ENCODE measurements at regions of chr2 and their contacts with region 1.

Region 1: DNA sequence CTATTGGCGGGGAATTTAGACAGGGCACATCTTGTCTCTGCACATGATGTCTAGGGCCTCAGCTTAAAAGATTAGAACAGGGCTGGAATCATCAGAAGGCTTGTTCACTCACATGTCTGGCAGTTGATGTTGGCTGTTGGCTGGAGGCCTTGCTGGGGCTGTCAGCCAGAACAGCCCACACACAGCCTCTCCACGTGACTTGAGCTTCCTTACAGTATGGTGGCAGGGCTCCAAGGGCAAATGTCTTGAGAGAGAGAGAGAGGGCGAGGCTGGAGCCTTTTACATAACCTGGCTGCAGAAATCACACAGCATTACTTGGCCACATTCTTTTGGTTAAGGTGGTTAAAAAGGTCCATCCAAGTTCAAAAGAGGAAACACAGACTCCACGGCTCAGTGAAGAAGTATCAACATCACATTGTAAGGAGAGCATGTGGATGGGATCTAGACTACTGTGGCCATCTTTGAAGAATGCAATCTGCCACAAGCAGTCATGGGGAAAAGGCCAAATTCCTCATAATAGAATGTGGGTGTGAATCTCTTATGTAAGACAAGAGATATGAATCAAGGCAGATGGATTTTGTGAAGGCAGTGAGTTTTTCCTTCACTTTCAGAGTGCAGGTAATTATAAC is 30.4 kb downstream of the SRSF7 start:
- DNase-seq: peak in 1 of 2 experiments; percentile 30
- H3K4me3 ChIP-seq: no peak overlapping the region
- H3K4me3 Mint-ChIP-seq: no peak overlapping the region
- H3K27ac Mint-ChIP-seq: peak overlapping the region; percentile 8
- H3K4me1 ChIP-seq: peaks cover 4% of the 10 kb centered on the region; the same call in 1 of the 2 replicates
- H3K4me1 Mint-ChIP-seq: peaks cover 13% of the 10 kb centered on the region
- H3K27me3 ChIP-seq: no peaks in the 10 kb centered on the region
- H3K27me3 Mint-ChIP-seq: no peaks in the 10 kb centered on the region
- CTCF ChIP-seq: no peak

Region 2: GRCh38 chr2:38581193-38582147 is 139.3 kb before region 1 on chr2:
- CTCF ChIA-PET with region 1: interaction called, 15 read pairs
- POLR2A ChIA-PET with region 1: no interaction called
- intact Hi-C with region 1: no loop called
- DNase-seq: peak in 1 of 2 experiments; percentile 69
- H3K4me3 ChIP-seq: no peak overlapping the region
- H3K4me3 Mint-ChIP-seq: no peak overlapping the region
- H3K27ac Mint-ChIP-seq: no peak overlapping the region
- H3K4me1 ChIP-seq: peaks cover 4% of the 10 kb centered on the region; the same call in 1 of the 2 replicates
- H3K4me1 Mint-ChIP-seq: peaks cover 9% of the 10 kb centered on the region
- H3K27me3 ChIP-seq: no peaks in the 10 kb centered on the region
- H3K27me3 Mint-ChIP-seq: no peaks in the 10 kb centered on the region
- CTCF ChIP-seq: peak; percentile 50 to 82

Region 3: GRCh38 chr2:38626326-38627035 is 94.2 kb before region 1 on chr2:
- CTCF ChIA-PET with region 1: no interaction called
- POLR2A ChIA-PET with region 1: no interaction called
- intact Hi-C with region 1: no loop called
- DNase-seq: no peak
- H3K4me3 ChIP-seq: no peak overlapping the region
- H3K4me3 Mint-ChIP-seq: no peak overlapping the region
- H3K27ac Mint-ChIP-seq: no peak overlapping the region
- H3K4me1 ChIP-seq: peaks cover 30% of the 10 kb centered on the region; the same call in 1 of the 2 replicates
- H3K4me1 Mint-ChIP-seq: peaks cover 20% of the 10 kb centered on the region
- H3K27me3 ChIP-seq: no peaks in the 10 kb centered on the region
- H3K27me3 Mint-ChIP-seq: no peaks in the 10 kb centered on the region
- CTCF ChIP-seq: no peak

Region 4: DNA sequence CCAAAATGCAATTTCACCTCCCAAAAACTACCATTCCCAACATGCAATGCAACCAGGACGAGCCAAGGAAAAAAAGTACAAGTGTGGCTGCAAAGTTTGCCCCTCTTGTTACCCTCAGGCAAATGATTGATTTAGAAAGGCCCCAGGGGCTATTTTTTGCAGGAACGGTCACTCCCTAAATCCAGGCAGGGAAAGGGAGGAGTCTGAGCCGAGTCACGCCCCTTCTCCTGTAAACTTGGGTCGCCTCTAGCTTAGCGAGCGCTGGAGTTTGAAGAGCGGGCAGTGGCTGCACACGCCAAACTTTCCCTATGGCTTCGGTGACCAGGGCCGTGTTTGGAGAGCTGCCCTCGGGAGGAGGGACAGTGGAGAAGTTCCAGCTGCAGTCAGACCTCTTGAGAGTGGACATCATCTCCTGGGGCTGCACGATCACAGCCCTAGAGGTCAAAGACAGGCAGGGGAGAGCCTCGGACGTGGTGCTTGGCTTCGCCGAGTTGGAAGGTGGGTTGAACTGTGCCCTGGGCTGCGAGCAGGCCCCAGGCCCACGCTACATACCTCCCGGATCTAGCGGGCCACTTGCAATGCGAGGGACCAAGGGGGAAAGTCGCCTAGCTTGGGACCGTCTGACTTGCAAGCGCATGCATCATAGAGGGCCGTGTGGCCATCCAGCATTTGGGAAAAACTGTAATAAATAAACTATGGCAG is 54.7 kb before region 1 on chr2 and contains the start of gene GALM:
- CTCF ChIA-PET with region 1: no interaction called
- POLR2A ChIA-PET with region 1: no interaction called
- intact Hi-C with region 1: loop called (anchors 5 kb)
- DNase-seq: peak; percentile 95
- H3K4me3 ChIP-seq: peak within 1 kb of the TSS; percentile 67
- H3K4me3 Mint-ChIP-seq: peak within 1 kb of the TSS; percentile 95
- H3K27ac Mint-ChIP-seq: peak within 1 kb of the TSS; percentile 71
- H3K4me1 ChIP-seq: peaks cover 20% of the 10 kb centered on the region
- H3K4me1 Mint-ChIP-seq: peaks cover 36% of the 10 kb centered on the region
- H3K27me3 ChIP-seq: no peaks in the 10 kb centered on the region
- H3K27me3 Mint-ChIP-seq: no peaks in the 10 kb centered on the region
- CTCF ChIP-seq: no peak
- total RNA-seq, gene GALM: 48.5 and 48.7 TPM in 2 replicates

Region 5: GRCh38 chr2:38690499-38691294 is 30.0 kb before region 1 on chr2:
- CTCF ChIA-PET with region 1: no interaction called
- POLR2A ChIA-PET with region 1: no interaction called
- intact Hi-C with region 1: loop called (anchors 1 kb)
- DNase-seq: peak in 1 of 2 experiments; percentile 30
- H3K4me3 ChIP-seq: no peak overlapping the region
- H3K4me3 Mint-ChIP-seq: no peak overlapping the region
- H3K27ac Mint-ChIP-seq: peak overlapping the region; percentile 23
- H3K4me1 ChIP-seq: peaks cover 28% of the 10 kb centered on the region
- H3K4me1 Mint-ChIP-seq: peaks cover 46% of the 10 kb centered on the region
- H3K27me3 ChIP-seq: no peaks in the 10 kb centered on the region
- H3K27me3 Mint-ChIP-seq: no peaks in the 10 kb centered on the region
- CTCF ChIP-seq: no peak